ENCODE measurements at regions of chr11 and their contacts with region 1.

Region 1: GRCh38 chr11:110296226-110297075 is at the start of gene RDX:
- DNase-seq: peak; percentile 82
- H3K4me3 ChIP-seq: peak within 1 kb of the TSS; percentile 61 to 94 (median 84)
- H3K27ac ChIP-seq: peak within 1 kb of the TSS; percentile 92 to 97 (median 95)
- H3K4me1 ChIP-seq: peaks cover 0 to 36% (median 27%) of the 10 kb centered on the region in 4 donors
- H3K27me3 ChIP-seq: no peaks in the 10 kb centered on the region
- CTCF ChIP-seq: no peak
- EP300 ChIP-seq: no peak
- POLR2A ChIP-seq: no peak
- total RNA-seq, gene RDX: 55.6 to 160 (median 71.8) TPM

Region 2: DNA sequence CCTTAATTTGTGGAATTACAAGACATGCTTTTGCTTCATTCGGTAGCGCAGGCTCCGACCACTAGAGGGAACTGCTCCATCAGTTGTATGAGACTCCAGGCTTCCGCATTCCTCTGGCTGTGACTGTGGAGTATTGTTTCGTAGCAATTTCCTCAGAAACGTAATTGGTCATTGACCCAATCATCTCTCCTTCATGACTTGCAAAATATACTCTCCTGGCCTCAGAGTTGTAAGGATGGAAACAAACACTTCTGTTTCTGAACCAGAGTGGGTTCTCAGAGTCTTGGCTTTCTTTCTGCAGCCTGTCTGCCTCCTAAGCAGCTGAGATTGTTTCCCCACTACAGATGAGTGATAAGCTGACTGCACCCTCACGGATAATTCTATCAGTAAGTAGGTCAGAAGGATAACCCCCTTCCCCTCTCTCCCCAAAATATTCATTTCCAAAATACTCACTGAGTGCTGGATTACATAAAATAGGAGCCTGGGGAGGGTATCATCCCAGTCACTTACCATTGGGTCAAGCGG is 350.1 kb before region 1 on chr11:
- intact Hi-C with region 1: loop called (anchors 10 kb)
- DNase-seq: peak; percentile 89
- H3K4me3 ChIP-seq: peak overlapping the region in 3 of 4 donors; percentile 20 to 38 (median 38)
- H3K27ac ChIP-seq: peak overlapping the region; percentile 54 to 62 (median 58)
- H3K4me1 ChIP-seq: peaks cover 0 to 5% (median 2%) of the 10 kb centered on the region in 4 donors
- H3K27me3 ChIP-seq: no peaks in the 10 kb centered on the region
- CTCF ChIP-seq: peak; percentile 74 to 89 (median 85)
- EP300 ChIP-seq: no peak
- POLR2A ChIP-seq: no peak

Region 3: DNA sequence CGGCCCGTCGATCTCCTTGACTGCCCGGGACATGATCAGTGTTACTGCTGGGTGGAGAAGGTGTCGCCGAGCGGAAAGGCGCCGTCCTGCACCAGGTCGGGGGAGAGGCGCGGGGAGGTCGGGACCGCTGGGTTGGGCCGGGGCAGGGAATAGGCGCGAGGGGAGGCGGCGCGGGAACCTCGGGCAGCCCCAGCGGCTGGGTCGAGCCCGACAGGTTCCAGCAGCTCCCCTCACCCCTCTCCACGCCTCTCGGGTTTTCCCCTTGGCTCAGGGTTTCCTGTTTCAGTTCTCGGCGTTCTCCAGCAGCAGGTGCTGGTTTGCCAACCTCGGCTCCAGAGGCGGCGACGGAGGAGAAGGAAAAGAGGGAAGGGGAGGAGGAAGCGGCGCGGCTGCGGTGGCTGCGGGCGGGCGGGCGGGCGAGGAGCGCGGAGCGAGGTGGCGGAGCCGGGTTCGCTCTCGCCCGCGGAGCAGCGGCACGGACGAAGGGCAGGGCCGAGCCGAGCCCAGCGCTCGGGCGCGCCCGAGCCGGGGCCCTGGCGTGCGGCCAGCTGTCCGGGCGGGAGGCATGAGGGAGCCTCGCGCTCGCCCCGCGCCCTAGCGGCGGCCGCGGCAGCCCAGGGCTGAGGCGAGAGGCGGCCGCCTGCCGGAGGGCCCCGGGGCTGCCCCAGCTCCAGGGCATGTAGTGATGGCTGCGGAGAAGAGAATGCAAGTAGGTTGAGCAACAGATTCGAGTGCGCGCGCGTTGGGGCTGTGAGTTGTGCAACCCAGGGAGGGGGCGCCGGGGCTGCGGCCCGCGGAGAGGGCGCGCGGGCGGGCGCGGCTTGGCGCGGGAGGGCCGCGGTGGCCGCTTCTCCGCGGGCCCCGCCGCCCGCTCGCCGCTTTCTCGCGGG is 203.7 kb before region 1 on chr11 and contains the start of gene ZC3H12C:
- intact Hi-C with region 1: loop called (anchors 5 kb)
- DNase-seq: peak; percentile 95
- H3K4me3 ChIP-seq: peak within 1 kb of the TSS; percentile 75 to 84 (median 80)
- H3K27ac ChIP-seq: peak within 1 kb of the TSS; percentile 97 to 99 (median 97)
- H3K4me1 ChIP-seq: peaks cover 0 to 34% (median 19%) of the 10 kb centered on the region in 4 donors
- H3K27me3 ChIP-seq: no peaks in the 10 kb centered on the region
- CTCF ChIP-seq: peak in 1 of 4 experiments; percentile 48
- EP300 ChIP-seq: no peak
- POLR2A ChIP-seq: no peak
- total RNA-seq, gene ZC3H12C: 16.4 to 21.7 (median 18.8) TPM

Region 4: GRCh38 chr11:110160016-110160415 is 136.4 kb before region 1 on chr11:
- intact Hi-C with region 1: no loop called
- DNase-seq: no peak
- H3K4me3 ChIP-seq: no peak overlapping the region
- H3K27ac ChIP-seq: no peak overlapping the region
- H3K4me1 ChIP-seq: no peaks in the 10 kb centered on the region
- H3K27me3 ChIP-seq: no peaks in the 10 kb centered on the region
- CTCF ChIP-seq: no peak
- EP300 ChIP-seq: no peak
- POLR2A ChIP-seq: no peak

Region 5: DNA sequence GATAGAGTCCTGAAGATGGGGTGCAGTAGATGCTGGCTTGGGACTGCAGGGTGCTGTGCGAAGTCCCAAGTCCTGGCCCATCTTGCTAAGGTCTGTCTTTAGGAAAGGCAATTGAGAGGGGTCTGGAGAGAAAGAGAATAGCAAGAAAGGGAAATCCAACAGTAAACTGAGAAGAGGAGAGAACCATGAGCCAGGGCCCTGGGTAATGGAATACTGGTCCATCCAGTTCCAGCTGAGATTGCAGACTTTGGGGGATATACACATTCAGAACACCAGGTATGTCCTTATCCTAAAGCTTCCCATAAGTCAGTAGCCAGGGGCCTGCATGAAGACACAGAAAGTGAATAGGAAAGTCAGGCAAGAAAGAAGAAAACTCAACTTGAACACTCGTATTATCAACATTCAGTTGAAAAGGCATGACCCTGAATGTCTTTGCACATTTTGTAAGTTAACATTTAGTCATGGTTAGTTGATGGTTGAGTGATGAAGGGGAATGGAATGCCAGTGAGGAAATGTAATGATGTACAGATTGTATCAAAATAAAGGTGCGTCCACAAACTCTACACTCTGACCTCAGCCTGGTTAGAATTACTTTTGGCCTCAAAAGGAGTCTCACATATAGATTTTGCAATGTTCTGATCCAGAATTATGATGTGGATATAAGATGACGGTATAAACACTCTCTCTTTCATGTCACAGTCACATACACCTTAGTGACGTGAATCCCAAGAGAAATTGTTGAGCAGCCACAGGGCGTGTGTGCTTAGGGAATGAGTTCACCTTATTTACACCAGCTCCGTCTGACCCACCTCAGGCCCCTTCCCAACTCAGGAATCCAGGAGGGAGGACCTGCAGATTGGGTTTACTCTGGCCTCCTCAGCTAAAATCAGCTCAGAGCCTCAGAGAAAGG is 100.4 kb before region 1 on chr11:
- intact Hi-C with region 1: loop called (anchors 5 kb)
- DNase-seq: no peak
- H3K4me3 ChIP-seq: no peak overlapping the region
- H3K27ac ChIP-seq: no peak overlapping the region
- H3K4me1 ChIP-seq: no peaks in the 10 kb centered on the region
- H3K27me3 ChIP-seq: no peaks in the 10 kb centered on the region
- CTCF ChIP-seq: no peak
- EP300 ChIP-seq: no peak
- POLR2A ChIP-seq: no peak

Region 6: GRCh38 chr11:110376711-110377324 is 80.4 kb after region 1 on chr11:
- intact Hi-C with region 1: loop called (anchors 2 kb)
- DNase-seq: peak; percentile 87
- H3K4me3 ChIP-seq: peak overlapping the region in 2 of 4 donors; percentile 14 to 30
- H3K27ac ChIP-seq: peak overlapping the region; percentile 21 to 63 (median 49)
- H3K4me1 ChIP-seq: peaks cover 0 to 12% (median 5%) of the 10 kb centered on the region in 4 donors
- H3K27me3 ChIP-seq: no peaks in the 10 kb centered on the region
- CTCF ChIP-seq: peak; percentile 52 to 76 (median 60)
- EP300 ChIP-seq: no peak
- POLR2A ChIP-seq: no peak

Region 7: DNA sequence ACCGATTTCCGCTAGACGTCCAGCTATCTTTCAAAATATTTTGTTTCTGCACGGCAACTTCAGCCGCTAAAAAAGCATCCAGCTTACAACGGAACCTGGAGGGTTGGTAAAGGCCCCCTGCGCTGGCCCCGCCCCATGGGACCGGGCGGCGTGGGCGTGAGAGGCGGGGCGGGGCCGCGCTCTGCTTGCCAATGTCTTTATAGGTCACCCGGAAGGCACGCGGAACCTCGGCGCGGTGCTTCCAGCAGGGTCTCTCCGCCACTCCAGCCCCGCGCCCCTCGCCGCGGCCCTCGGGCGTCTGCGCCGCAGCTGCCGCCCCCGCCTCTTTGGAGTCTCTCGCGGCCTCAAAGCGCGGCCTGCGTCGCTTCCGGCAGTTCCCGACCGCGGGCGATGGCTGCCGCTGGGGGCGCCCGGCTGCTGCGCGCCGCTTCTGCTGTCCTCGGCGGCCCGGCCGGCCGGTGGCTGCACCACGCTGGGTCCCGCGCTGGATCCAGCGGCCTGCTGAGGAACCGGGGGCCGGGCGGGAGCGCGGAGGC is 133.3 kb after region 1 on chr11 and contains the start of gene FDX1:
- intact Hi-C with region 1: loop called (anchors 5 kb)
- DNase-seq: peak; percentile 87
- H3K4me3 ChIP-seq: peak within 1 kb of the TSS; percentile 55 to 80 (median 74)
- H3K27ac ChIP-seq: peak within 1 kb of the TSS; percentile 90 to 93 (median 92)
- H3K4me1 ChIP-seq: peaks cover 0 to 36% (median 26%) of the 10 kb centered on the region in 4 donors
- H3K27me3 ChIP-seq: no peaks in the 10 kb centered on the region
- CTCF ChIP-seq: peak in 2 of 4 experiments; percentile 34 to 71
- EP300 ChIP-seq: no peak
- POLR2A ChIP-seq: no peak
- total RNA-seq, gene FDX1: 12.5 to 13.8 (median 13.5) TPM